H1 (cell line): ENCODE measurements at regions of chr5 and their contacts with region 1.

Region 1: GRCh38 chr5:179623003-179623880 is at the start of gene HNRNPH1:
- DNase-seq: peak; percentile 97 to 98
- H3K4me3 ChIP-seq: peak within 1 kb of the TSS; percentile 80 to 99 (median 99)
- H3K27ac ChIP-seq: peak within 1 kb of the TSS; percentile 99
- H3K4me1 ChIP-seq: peaks cover 5 to 24% (median 14%) of the 10 kb centered on the region in 4 experiments
- H3K27me3 ChIP-seq: no peaks in the 10 kb centered on the region
- CTCF ChIP-seq: no peak
- EP300 ChIP-seq: no peak
- POLR2A ChIP-seq: peak; percentile 99 to 100
- RAD21 ChIP-seq: no peak
- total RNA-seq, gene HNRNPH1: 720 and 735 TPM in 2 replicates

Region 2: GRCh38 chr5:179559284-179560252 is 63.7 kb before region 1 on chr5:
- CTCF ChIA-PET with region 1: no interaction called
- POLR2A ChIA-PET with region 1: interaction called, 41 read pairs
- DNase-seq: peak; percentile 91 to 95
- H3K4me3 ChIP-seq: peak overlapping the region; percentile 66 to 84 (median 80)
- H3K27ac ChIP-seq: peak overlapping the region; percentile 97
- H3K4me1 ChIP-seq: peaks cover 0 to 5% (median 3%) of the 10 kb centered on the region in 4 experiments; a peak in 5 of 7 replicates
- H3K27me3 ChIP-seq: no peaks in the 10 kb centered on the region
- CTCF ChIP-seq: no peak
- EP300 ChIP-seq: no peak
- POLR2A ChIP-seq: peak; percentile 98
- RAD21 ChIP-seq: no peak

Region 3: GRCh38 chr5:179608131-179608581 is 15.1 kb before region 1 on chr5:
- CTCF ChIA-PET with region 1: interaction called, 19 read pairs
- POLR2A ChIA-PET with region 1: no interaction called
- DNase-seq: no peak
- H3K4me3 ChIP-seq: no peak overlapping the region
- H3K27ac ChIP-seq: no peak overlapping the region
- H3K4me1 ChIP-seq: no peaks in the 10 kb centered on the region
- H3K27me3 ChIP-seq: no peaks in the 10 kb centered on the region
- CTCF ChIP-seq: no peak
- EP300 ChIP-seq: no peak
- POLR2A ChIP-seq: peak in 1 of 2 experiments; percentile 12; a peak in 2 of 3 replicates
- RAD21 ChIP-seq: no peak

Region 4: DNA sequence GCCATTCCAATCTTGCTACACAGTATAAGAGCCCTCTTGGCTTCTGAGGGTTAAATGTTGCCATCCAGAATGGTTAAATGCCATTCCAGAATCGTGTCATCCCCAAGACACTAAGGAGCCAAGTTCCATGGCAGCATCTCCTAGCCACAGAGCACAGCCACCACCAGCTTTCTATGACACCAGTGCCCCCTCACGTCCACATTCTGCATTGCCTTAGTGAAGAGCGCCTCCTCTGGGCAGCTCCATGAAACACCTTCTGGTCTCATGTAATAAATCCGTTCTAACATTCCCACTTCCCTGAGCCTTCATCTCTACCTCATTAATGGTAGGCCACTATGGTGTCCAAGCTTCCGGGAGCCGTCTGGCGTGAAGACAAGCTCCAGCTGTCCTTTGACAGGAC is 45.1 kb after region 1 on chr5:
- CTCF ChIA-PET with region 1: interaction called, 67 read pairs
- POLR2A ChIA-PET with region 1: interaction called, 351 read pairs
- DNase-seq: peak; percentile 54 to 85
- H3K4me3 ChIP-seq: no peak overlapping the region
- H3K27ac ChIP-seq: no peak overlapping the region
- H3K4me1 ChIP-seq: no peaks in the 10 kb centered on the region
- H3K27me3 ChIP-seq: no peaks in the 10 kb centered on the region
- CTCF ChIP-seq: peak; percentile 99 to 100 (median 100)
- EP300 ChIP-seq: no peak
- POLR2A ChIP-seq: no peak
- RAD21 ChIP-seq: peak; percentile 97 to 98

Region 5: GRCh38 chr5:179697993-179698934 is 75.0 kb after region 1 on chr5:
- CTCF ChIA-PET with region 1: no interaction called
- POLR2A ChIA-PET with region 1: interaction called, 33 read pairs
- DNase-seq: peak; percentile 96 to 98
- H3K4me3 ChIP-seq: peak overlapping the region; percentile 91 to 99 (median 96)
- H3K27ac ChIP-seq: peak overlapping the region; percentile 91
- H3K4me1 ChIP-seq: peaks cover 0 to 9% (median 2%) of the 10 kb centered on the region in 4 experiments; a peak in 3 of 7 replicates
- H3K27me3 ChIP-seq: no peaks in the 10 kb centered on the region
- CTCF ChIP-seq: no peak
- EP300 ChIP-seq: no peak
- POLR2A ChIP-seq: peak; percentile 74 to 82
- RAD21 ChIP-seq: no peak

Region 6: GRCh38 chr5:179763215-179763945 is 140.1 kb after region 1 on chr5:
- CTCF ChIA-PET with region 1: no interaction called
- POLR2A ChIA-PET with region 1: interaction called, 10 read pairs
- DNase-seq: no peak
- H3K4me3 ChIP-seq: no peak overlapping the region
- H3K27ac ChIP-seq: no peak overlapping the region
- H3K4me1 ChIP-seq: peaks cover 3 to 19% (median 5%) of the 10 kb centered on the region in 4 experiments
- H3K27me3 ChIP-seq: no peaks in the 10 kb centered on the region
- CTCF ChIP-seq: peak; percentile 47 to 94 (median 89)
- EP300 ChIP-seq: no peak
- POLR2A ChIP-seq: no peak
- RAD21 ChIP-seq: peak; percentile 66 to 71